Right cardiac atrium (tissue), 5 donors: ENCODE measurements at regions of chr14 and their contacts with region 1.

Region 1: GRCh38 chr14:69259527-69260189 is at the start of gene GALNT16:
- DNase-seq: peak; percentile 53 to 79 (median 78)
- ATAC-seq: peak; percentile 24 to 28
- H3K4me3 ChIP-seq: peak within 1 kb of the TSS; percentile 51
- H3K27ac ChIP-seq: no peak within 1 kb of the TSS
- H3K4me1 ChIP-seq: peaks cover 7% of the 10 kb centered on the region
- H3K27me3 ChIP-seq: no peaks in the 10 kb centered on the region
- total RNA-seq, gene GALNT16: 24.3 to 50.9 (median 34.0) TPM

Region 2: GRCh38 chr14:69204753-69205152 is 54.9 kb before region 1 on chr14:
- intact Hi-C with region 1: no loop called
- DNase-seq: no peak
- ATAC-seq: no peak
- H3K4me3 ChIP-seq: no peak overlapping the region
- H3K27ac ChIP-seq: no peak overlapping the region
- H3K4me1 ChIP-seq: no peaks in the 10 kb centered on the region
- H3K27me3 ChIP-seq: no peaks in the 10 kb centered on the region

Region 3: DNA sequence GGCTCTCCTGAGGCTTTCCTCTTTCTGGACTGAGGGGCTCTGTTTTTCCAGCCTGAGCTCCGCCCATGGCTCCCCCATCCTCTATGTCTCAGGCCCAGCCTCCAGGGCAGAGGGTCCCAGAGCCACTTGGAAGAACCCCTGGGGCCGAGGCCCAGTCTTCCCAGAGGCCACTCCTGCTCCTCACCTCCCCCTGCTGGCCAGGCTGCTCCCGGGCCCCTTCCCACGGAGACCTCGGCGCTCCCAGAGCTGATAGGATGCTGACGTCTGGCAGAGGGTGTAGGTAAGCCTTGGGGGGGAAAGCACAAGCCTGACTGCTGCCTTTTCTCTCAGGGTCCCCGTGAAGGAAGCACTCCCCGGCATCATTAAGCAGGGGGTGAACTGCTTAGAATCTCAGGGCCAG is 87.1 kb after region 1 on chr14:
- intact Hi-C with region 1: loop called in 1 of 4 experiments (anchors 5 kb)
- DNase-seq: peak; percentile 34 to 78 (median 74)
- ATAC-seq: peak; percentile 25 to 33
- H3K4me3 ChIP-seq: no peak overlapping the region
- H3K27ac ChIP-seq: no peak overlapping the region
- H3K4me1 ChIP-seq: no peaks in the 10 kb centered on the region
- H3K27me3 ChIP-seq: no peaks in the 10 kb centered on the region